B cell (primary cell): ENCODE measurements at regions of chr4 and their contacts with region 1.

Region 1: GRCh38 chr4:113593400-113594230 is 167.9 kb downstream of the CAMK2D start:
- DNase-seq: peak; percentile 57
- ATAC-seq: peak; percentile 82
- H3K4me3 ChIP-seq: no peak overlapping the region
- H3K4me3 Mint-ChIP-seq: peak overlapping the region; percentile 53
- H3K27ac ChIP-seq: peak overlapping the region; percentile 75 to 85
- H3K27ac Mint-ChIP-seq: peak overlapping the region; percentile 88
- H3K4me1 ChIP-seq: peaks cover 44 to 55% of the 10 kb centered on the region in 2 donors
- H3K4me1 Mint-ChIP-seq: peaks cover 71% of the 10 kb centered on the region
- H3K27me3 ChIP-seq: no peaks in the 10 kb centered on the region
- H3K27me3 Mint-ChIP-seq: no peaks in the 10 kb centered on the region
- CTCF ChIP-seq: no peak

Region 2: DNA sequence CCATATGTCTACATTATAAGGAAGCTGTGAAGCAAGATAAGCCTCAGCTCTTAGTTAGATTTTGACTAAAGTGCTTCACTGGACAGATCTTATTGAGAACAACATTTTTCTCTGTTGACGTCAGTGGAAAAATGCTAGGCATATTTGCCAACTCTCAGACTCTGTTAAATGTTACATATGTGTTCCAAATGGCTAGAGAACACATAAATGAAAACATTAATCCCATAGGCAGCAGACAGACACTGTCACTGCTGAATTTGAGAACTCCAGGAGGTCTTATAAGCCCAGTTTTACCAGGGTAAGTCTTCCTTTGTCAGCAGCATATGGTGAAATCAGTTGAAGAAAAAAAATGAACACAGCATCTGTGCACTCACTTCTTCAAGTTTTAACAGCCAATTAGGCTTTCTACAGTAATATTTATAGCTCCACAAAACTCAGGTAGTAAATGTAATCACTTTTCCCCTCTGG is 18.9 kb before region 1 on chr4:
- CTCF ChIA-PET with region 1: interaction called, 6 read pairs
- POLR2A ChIA-PET with region 1: interaction called, 3 read pairs
- intact Hi-C with region 1: loop called (anchors 2 kb)
- DNase-seq: no peak
- ATAC-seq: no peak
- H3K4me3 ChIP-seq: no peak overlapping the region
- H3K4me3 Mint-ChIP-seq: no peak overlapping the region
- H3K27ac ChIP-seq: peak overlapping the region; percentile 34 to 59
- H3K27ac Mint-ChIP-seq: peak overlapping the region; percentile 8
- H3K4me1 ChIP-seq: peaks cover 20 to 55% of the 10 kb centered on the region in 2 donors
- H3K4me1 Mint-ChIP-seq: peaks cover 82% of the 10 kb centered on the region
- H3K27me3 ChIP-seq: no peaks in the 10 kb centered on the region
- H3K27me3 Mint-ChIP-seq: no peaks in the 10 kb centered on the region
- CTCF ChIP-seq: no peak

Region 3: GRCh38 chr4:114146947-114147618 is 553.5 kb after region 1 on chr4:
- CTCF ChIA-PET with region 1: no interaction called
- POLR2A ChIA-PET with region 1: no interaction called
- intact Hi-C with region 1: no loop called
- DNase-seq: no peak
- ATAC-seq: no peak
- H3K4me3 ChIP-seq: peak overlapping the region in 1 of 5 experiments; percentile 21
- H3K4me3 Mint-ChIP-seq: peak overlapping the region; percentile 64
- H3K27ac ChIP-seq: no peak overlapping the region
- H3K27ac Mint-ChIP-seq: no peak overlapping the region
- H3K4me1 ChIP-seq: no peaks in the 10 kb centered on the region
- H3K4me1 Mint-ChIP-seq: peaks cover 8% of the 10 kb centered on the region
- H3K27me3 ChIP-seq: peaks cover 0 to 11% (median 0%) of the 10 kb centered on the region in 4 experiments
- H3K27me3 Mint-ChIP-seq: peaks cover 42% of the 10 kb centered on the region
- CTCF ChIP-seq: no peak